A549 (cell line): ENCODE measurements at regions of chr17 and their contacts with region 1.

Region 1: DNA sequence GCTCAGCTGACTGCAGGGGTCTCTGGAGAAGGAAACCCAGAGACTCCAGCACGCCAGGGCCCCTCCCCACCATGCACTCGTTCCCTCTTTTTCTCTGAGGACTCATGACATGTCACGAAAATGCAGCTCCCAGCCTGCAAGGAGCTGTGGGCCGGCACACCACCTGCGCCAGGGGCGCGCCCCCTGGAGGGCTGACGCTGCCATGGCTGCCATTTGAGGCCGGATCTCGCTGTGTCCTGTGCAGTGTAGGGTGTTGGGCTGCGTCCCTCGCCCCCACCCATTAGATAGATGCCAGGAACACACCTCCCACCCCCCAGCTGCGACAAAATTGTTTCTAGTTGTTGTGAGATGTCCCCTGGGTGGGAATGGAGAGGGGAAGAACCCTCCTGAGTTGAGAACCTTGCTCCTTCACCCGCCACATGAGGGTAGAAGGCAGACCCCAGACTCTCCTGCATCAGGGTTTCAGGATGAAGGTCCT is 8.2 kb downstream of the SYNGR2 start:
- DNase-seq: peak; percentile 76 to 86
- ATAC-seq: peak; percentile 75 to 81
- H3K4me3 ChIP-seq: no peak overlapping the region
- H3K27ac ChIP-seq: peak overlapping the region in 1 of 2 experiments; percentile 34; a peak in 1 of 6 replicates
- H3K4me1 ChIP-seq: peaks cover 30% of the 10 kb centered on the region
- CTCF ChIP-seq: peak; percentile 94
- EP300 ChIP-seq: no peak
- POLR2A ChIP-seq: no peak
- RAD21 ChIP-seq: peak; percentile 73 to 82

Region 2: DNA sequence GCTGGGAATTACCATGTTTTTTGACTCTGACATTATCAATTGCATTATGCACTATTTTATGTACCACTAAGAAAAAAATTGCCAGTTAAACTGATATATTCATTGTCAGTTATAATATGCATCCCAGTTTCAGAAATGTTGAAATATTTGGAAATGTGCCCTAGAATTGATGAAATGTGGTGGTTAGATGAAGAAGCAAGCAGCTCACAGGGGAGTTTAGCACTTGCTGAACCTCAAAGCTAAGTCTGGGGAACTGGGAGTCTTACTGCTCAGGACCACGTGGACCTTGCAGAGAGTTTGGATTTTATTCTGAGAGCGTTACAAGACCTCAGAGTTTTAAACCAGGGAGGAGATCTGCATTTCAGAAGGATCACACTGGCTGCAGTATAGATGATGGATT is 150.2 kb before region 1 on chr17:
- CTCF ChIA-PET with region 1: interaction called, 10 read pairs
- POLR2A ChIA-PET with region 1: no interaction called
- DNase-seq: no peak
- ATAC-seq: no peak
- H3K4me3 ChIP-seq: no peak overlapping the region
- H3K27ac ChIP-seq: no peak overlapping the region
- H3K4me1 ChIP-seq: no peaks in the 10 kb centered on the region
- CTCF ChIP-seq: no peak
- EP300 ChIP-seq: no peak
- POLR2A ChIP-seq: no peak
- RAD21 ChIP-seq: no peak

Region 3: GRCh38 chr17:78096093-78096492 is 80.5 kb before region 1 on chr17:
- CTCF ChIA-PET with region 1: interaction called, 13 read pairs
- POLR2A ChIA-PET with region 1: interaction called, 4 read pairs
- DNase-seq: no peak
- ATAC-seq: no peak; a peak in 1 of 6 replicates
- H3K4me3 ChIP-seq: no peak overlapping the region
- H3K27ac ChIP-seq: no peak overlapping the region
- H3K4me1 ChIP-seq: no peaks in the 10 kb centered on the region
- CTCF ChIP-seq: no peak
- EP300 ChIP-seq: no peak
- POLR2A ChIP-seq: no peak
- RAD21 ChIP-seq: no peak

Region 4: GRCh38 chr17:78128551-78129350 is 47.8 kb before region 1 on chr17 and contains the start of gene TMC6:
- CTCF ChIA-PET with region 1: interaction called, 295 read pairs
- POLR2A ChIA-PET with region 1: interaction called, 3 read pairs
- DNase-seq: peak; percentile 56 to 74
- ATAC-seq: peak; percentile 16 to 60
- H3K4me3 ChIP-seq: peak within 1 kb of the TSS; percentile 79
- H3K27ac ChIP-seq: peak within 1 kb of the TSS; percentile 77 to 93
- H3K4me1 ChIP-seq: peaks cover 14% of the 10 kb centered on the region
- CTCF ChIP-seq: no peak
- EP300 ChIP-seq: no peak
- POLR2A ChIP-seq: peak; percentile 38; the same call in 1 of the 2 replicates
- RAD21 ChIP-seq: no peak
- polyA plus RNA-seq, gene TMC6: 4.7 and 5.1 TPM in 2 replicates

Region 5: DNA sequence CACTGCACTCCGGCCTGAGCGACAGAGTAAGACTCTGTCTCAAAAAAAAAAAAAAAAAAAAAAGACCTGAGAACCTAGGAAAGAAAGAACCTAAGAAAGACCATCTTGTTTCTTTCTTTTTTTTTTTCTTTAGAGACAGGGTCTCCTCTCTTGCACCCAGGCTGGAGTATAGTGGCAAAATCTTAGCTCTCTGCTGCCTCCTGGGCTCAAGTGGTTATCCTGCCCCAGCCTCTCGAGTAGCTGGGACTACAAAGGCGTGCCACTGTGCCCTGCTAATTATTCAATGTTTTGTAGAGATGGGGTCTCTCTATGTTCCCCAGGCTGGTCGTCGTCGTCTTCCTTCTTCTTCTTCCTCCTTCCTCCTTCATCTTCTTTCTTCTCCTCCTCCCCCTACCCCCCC is 29.7 kb after region 1 on chr17:
- CTCF ChIA-PET with region 1: interaction called, 17 read pairs
- POLR2A ChIA-PET with region 1: no interaction called
- DNase-seq: no peak
- ATAC-seq: peak; percentile 66 to 67; a peak in 4 of 6 replicates
- H3K4me3 ChIP-seq: no peak overlapping the region
- H3K27ac ChIP-seq: no peak overlapping the region
- H3K4me1 ChIP-seq: no peaks in the 10 kb centered on the region
- CTCF ChIP-seq: 0 out of 3 replicates have a peak, but pooled peaks have one; percentile 6
- EP300 ChIP-seq: no peak
- POLR2A ChIP-seq: no peak
- RAD21 ChIP-seq: peak in 1 of 2 experiments; percentile 18; a peak in 1 of 5 replicates

Region 6: DNA sequence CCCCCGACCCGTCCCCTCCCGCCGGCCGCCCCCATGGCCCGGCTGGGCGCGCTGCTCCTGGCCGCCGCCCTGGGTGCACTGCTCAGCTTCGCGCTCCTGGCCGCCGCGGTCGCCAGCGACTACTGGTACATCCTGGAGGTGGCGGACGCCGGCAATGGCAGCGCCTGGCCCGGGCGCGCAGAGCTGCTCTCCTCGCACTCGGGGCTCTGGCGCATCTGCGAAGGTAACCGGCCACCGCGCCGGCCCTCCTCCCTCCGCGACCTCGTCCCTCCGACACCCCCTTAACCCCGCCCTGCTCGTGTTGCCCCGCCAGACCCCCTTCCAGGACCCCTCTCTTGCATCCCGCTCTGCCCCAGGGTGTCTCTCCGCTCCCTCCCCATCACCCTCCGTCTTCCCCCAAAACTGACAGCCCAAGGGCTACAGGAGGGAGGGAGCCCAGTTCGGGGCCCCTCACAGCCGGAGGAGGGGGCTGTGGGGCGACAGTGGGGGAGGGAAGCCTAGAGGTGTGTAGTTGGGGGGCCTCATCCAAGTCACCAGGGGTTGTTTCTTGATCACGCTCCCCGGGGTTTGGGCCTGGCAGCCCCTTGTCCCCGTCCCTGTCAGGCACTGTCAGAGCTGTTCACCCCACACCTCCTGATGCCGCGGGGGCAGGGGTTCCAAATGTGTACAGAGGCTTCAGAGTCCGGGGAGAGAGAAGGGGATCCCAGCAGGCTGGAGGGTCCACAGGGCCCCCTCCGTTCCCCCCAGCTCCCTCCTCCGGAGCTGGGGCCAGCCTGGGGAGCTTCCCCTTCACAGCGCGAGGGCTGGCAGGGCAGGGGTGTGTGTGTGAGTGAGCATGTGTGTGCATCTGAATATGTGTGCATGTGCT is 55.6 kb after region 1 on chr17:
- CTCF ChIA-PET with region 1: no interaction called
- POLR2A ChIA-PET with region 1: no interaction called
- DNase-seq: no peak
- ATAC-seq: peak in 1 of 2 experiments; percentile 38; a peak in 3 of 6 replicates
- H3K4me3 ChIP-seq: peak overlapping the region; percentile 35; the same call in 2 of the 3 replicates
- H3K27ac ChIP-seq: peak overlapping the region in 1 of 2 experiments; percentile 61; a peak in 2 of 6 replicates
- H3K4me1 ChIP-seq: no peaks in the 10 kb centered on the region; the same call in 2 of the 3 replicates
- CTCF ChIP-seq: no peak
- EP300 ChIP-seq: no peak
- POLR2A ChIP-seq: no peak
- RAD21 ChIP-seq: no peak

Region 7: GRCh38 chr17:78708510-78708973 is 532.0 kb after region 1 on chr17:
- CTCF ChIA-PET with region 1: no interaction called
- POLR2A ChIA-PET with region 1: no interaction called
- DNase-seq: peak; percentile 92 to 99
- ATAC-seq: peak; percentile 97 to 98
- H3K4me3 ChIP-seq: no peak overlapping the region
- H3K27ac ChIP-seq: peak overlapping the region; percentile 78 to 88
- H3K4me1 ChIP-seq: peaks cover 48% of the 10 kb centered on the region
- CTCF ChIP-seq: peak; percentile 99
- EP300 ChIP-seq: no peak; a peak in 1 of 5 replicates
- POLR2A ChIP-seq: no peak
- RAD21 ChIP-seq: peak; percentile 100